ENCODE measurements at regions of chr2 and their contacts with region 1.

Region 1: DNA sequence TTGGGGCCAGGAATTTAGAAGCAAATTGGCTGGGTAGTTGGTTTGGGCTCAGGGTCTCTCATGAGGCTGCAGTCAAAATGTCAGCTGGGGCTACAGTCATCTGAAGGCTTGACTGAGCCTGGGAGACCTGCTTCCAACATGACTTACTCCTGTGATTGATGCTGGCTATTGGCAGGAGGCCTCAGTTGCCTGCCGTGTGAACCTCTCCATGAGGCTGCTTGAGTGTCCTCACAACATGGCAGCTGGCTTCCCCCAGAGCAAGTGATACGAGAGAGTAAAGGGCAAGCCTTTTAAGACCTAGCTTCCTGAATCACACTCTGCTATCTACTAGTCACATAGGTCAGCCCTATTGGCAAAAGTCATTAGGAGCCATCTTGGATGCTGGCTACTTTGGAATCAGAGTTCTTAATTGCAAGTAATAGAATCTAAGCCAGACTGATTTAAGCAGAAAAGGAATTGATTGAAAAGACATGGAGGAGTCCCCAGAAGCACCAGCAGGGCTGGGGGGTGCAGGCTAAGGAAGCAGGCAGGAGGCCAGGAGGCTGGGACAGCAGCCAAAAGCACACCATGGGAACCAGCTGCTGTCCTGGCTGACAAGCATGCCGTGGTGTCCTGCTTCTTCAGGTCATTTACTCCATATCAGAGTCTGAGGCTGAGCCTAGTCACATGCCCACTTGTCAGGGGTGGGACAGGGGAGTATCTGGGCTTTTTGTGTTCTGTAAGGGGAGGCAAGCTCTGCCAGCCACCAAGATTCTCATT is 7.8 kb upstream of the GIGYF2 start:
- DNase-seq: peak; percentile 5
- H3K4me3 ChIP-seq: no peak overlapping the region
- CTCF ChIP-seq: no peak

Region 2: DNA sequence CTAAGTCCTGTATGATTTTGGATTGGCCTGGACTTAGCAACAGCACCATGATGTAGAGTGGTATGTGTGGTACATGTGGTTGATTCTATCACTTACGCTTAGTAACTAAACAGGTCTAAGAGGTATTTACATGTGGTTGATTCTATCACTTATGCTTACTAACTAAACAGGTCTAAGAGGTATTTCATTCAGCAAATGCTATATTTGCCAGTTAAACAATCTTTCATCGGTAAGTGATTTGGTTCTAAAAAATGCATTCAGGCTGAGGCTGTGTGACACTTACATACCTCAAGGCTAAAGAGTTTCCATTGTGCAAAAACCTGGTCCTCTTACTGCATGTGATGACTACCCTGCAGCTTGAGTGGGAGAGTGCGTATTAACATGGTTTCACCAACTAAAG is 125.8 kb before region 1 on chr2:
- in situ Hi-C with region 1: no loop called
- DNase-seq: no peak
- H3K4me3 ChIP-seq: no peak overlapping the region
- CTCF ChIP-seq: no peak

Region 3: DNA sequence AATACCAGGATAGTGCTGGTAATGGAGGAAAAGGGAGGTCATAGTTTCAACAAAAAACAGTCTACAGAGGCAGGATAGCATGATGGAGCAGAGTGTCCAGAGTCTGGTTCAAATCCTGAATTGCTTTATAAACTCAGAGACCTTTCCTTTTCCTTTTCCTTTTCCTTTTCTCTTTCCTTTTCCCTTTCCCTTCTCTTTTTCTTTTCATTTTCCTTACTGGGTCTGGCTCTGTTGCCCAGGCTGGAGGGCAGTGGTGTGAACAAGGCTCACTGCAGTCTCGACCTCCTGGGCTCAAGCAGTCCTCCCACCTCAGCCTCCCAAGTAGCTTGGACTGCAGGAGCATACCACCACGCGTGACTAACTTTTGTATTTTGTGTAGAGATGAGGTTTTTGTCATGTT is 39.5 kb after region 1 on chr2:
- in situ Hi-C with region 1: loop called (anchors 5 kb)
- DNase-seq: no peak
- H3K4me3 ChIP-seq: no peak overlapping the region
- CTCF ChIP-seq: no peak

Measured in astrocyte of the cerebellum (primary cell).